MCF 10A (cell line): ENCODE measurements at regions of chr1 and their contacts with region 1.

Region 1: GRCh38 chr1:33319949-33320605 is 821 bp downstream of the A3GALT2 start:
- DNase-seq: no peak
- H3K4me3 Mint-ChIP-seq: no peak overlapping the region
- H3K27ac Mint-ChIP-seq: no peak overlapping the region
- H3K4me1 Mint-ChIP-seq: no peaks in the 10 kb centered on the region
- H3K27me3 Mint-ChIP-seq: no peaks in the 10 kb centered on the region
- CTCF ChIP-seq: no peak

Region 2: DNA sequence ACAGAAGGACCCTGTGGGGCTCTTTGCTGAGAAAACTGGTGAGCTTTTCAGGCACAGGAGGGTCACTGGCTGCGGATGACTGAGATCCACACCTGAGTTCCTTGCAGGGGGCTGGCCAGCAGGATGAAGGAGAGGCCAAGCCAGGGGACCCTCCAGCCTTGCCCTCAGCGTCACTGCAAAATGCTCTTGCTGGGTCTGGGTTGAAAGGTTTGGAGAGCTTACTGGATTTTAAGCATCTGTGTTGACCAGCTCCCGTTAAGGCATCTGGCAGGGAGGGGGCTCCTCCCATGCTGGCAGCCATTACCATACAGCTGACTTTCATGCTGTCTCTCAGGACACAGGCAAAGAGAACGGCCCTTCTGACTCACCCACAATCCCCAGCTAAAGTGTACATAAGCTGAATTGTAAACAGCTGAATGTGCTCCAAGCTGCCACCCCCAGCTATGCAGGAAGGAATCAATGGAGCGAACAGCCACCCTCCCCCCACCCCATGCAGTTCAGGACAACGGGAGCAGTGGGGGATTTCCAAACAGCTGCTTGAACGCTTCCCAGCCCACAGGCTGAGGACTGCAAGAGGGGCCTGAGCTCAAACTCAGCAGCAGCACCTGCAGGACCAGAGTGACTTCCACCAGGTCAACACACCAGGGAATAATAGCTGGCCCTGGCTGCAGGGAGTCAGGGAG is 22.1 kb after region 1 on chr1:
- CTCF ChIA-PET with region 1: interaction called, 6 read pairs
- POLR2A ChIA-PET with region 1: interaction called, 11 read pairs
- intact Hi-C with region 1: no loop called
- DNase-seq: peak; percentile 93
- H3K4me3 Mint-ChIP-seq: peak overlapping the region; percentile 53
- H3K27ac Mint-ChIP-seq: peak overlapping the region; percentile 85
- H3K4me1 Mint-ChIP-seq: peaks cover 74% of the 10 kb centered on the region
- H3K27me3 Mint-ChIP-seq: no peaks in the 10 kb centered on the region
- CTCF ChIP-seq: no peak

Region 3: DNA sequence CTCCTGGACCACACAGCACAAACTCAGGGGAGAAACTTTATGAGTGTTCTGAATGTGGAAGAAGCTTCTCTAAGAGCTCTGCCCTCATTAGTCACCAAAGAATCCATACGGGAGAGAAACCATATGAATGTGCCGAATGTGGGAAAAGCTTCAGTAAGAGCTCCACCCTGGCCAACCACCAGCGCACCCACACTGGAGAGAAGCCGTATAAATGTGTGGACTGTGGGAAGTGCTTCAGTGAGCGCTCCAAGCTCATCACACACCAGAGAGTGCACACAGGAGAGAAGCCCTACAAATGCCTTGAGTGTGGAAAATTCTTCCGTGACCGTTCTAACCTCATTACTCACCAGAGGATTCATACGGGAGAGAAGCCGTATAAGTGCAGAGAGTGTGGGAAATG is 174.9 kb after region 1 on chr1:
- CTCF ChIA-PET with region 1: no interaction called
- POLR2A ChIA-PET with region 1: no interaction called
- intact Hi-C with region 1: no loop called
- DNase-seq: no peak
- H3K4me3 Mint-ChIP-seq: no peak overlapping the region
- H3K27ac Mint-ChIP-seq: no peak overlapping the region
- H3K4me1 Mint-ChIP-seq: no peaks in the 10 kb centered on the region
- H3K27me3 Mint-ChIP-seq: no peaks in the 10 kb centered on the region
- CTCF ChIP-seq: no peak